ENCODE measurements at regions of chrX and their contacts with region 1.

Region 1: GRCh38 chrX:136866337-136867095 is 14.0 kb downstream of the RBMX start:
- DNase-seq: no peak
- ATAC-seq: peak in 1 of 4 experiments; percentile 16
- H3K4me3 ChIP-seq: no peak overlapping the region
- H3K4me3 Mint-ChIP-seq: no peak overlapping the region
- H3K27ac ChIP-seq: no peak overlapping the region
- H3K27ac Mint-ChIP-seq: peak overlapping the region in 1 of 2 donors; percentile 55
- H3K4me1 ChIP-seq: peaks cover 0 to 3% of the 10 kb centered on the region in 2 experiments
- H3K4me1 Mint-ChIP-seq: peaks cover 31 to 39% (median 34%) of the 10 kb centered on the region in 3 donors
- H3K27me3 ChIP-seq: no peaks in the 10 kb centered on the region
- H3K27me3 Mint-ChIP-seq: peaks cover 0 to 6% of the 10 kb centered on the region in 2 donors

Region 2: GRCh38 chrX:136477026-136477425 is 389.5 kb before region 1 on chrX:
- CTCF ChIA-PET with region 1: no interaction called
- POLR2A ChIA-PET with region 1: interaction called in 1 of 2 experiments, 10 read pairs
- DNase-seq: no peak
- ATAC-seq: no peak
- H3K4me3 ChIP-seq: no peak overlapping the region
- H3K4me3 Mint-ChIP-seq: no peak overlapping the region
- H3K27ac ChIP-seq: no peak overlapping the region
- H3K27ac Mint-ChIP-seq: no peak overlapping the region
- H3K4me1 ChIP-seq: no peaks in the 10 kb centered on the region
- H3K4me1 Mint-ChIP-seq: no peaks in the 10 kb centered on the region
- H3K27me3 ChIP-seq: peaks cover 0 to 4% of the 10 kb centered on the region in 2 experiments
- H3K27me3 Mint-ChIP-seq: peaks cover 0 to 20% of the 10 kb centered on the region in 2 donors

Region 3: DNA sequence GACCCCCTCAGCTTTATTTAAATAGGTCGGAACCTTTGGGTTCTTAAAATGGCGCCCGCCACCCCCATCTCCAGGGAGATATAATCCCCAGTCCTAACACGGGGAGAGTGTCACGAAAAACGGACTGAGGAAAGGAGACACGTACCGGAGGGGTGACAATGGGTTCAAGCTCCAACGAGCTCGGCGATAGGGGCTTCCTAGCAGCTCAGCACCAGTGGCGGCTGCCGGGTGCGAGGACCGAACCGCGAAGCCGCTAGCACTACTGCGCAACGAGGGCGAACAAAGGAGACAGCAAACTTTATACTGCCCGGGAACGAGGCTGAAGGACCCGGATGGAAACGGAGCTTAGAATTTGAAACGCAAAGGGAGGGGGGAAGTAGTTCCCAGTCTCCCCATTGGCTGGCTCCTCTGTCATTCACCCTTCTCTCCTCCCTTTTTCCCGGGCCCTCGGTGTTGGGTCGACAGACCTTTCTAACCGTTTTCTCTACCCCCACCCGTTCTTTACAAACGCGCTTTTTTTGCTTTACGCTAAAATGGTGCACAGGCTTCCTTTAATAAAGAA is 14.0 kb after region 1 on chrX and contains the start of gene RBMX:
- CTCF ChIA-PET with region 1: interaction called in 1 of 2 experiments, 5 read pairs
- POLR2A ChIA-PET with region 1: interaction called, 3 to 22 read pairs
- DNase-seq: peak; percentile 74 to 94 (median 87)
- ATAC-seq: peak; percentile 89 to 93 (median 91)
- H3K4me3 ChIP-seq: peak within 1 kb of the TSS; percentile 87
- H3K4me3 Mint-ChIP-seq: peak within 1 kb of the TSS; percentile 94 to 96 (median 96)
- H3K27ac ChIP-seq: peak within 1 kb of the TSS; percentile 97
- H3K27ac Mint-ChIP-seq: peak within 1 kb of the TSS; percentile 97 to 99
- H3K4me1 ChIP-seq: peaks cover 5 to 17% of the 10 kb centered on the region in 2 experiments
- H3K4me1 Mint-ChIP-seq: peaks cover 11 to 21% (median 19%) of the 10 kb centered on the region in 3 donors
- H3K27me3 ChIP-seq: no peaks in the 10 kb centered on the region
- H3K27me3 Mint-ChIP-seq: peaks cover 0 to 3% of the 10 kb centered on the region in 2 donors
- total RNA-seq, gene RBMX: 203 to 281 (median 209) TPM

Region 4: DNA sequence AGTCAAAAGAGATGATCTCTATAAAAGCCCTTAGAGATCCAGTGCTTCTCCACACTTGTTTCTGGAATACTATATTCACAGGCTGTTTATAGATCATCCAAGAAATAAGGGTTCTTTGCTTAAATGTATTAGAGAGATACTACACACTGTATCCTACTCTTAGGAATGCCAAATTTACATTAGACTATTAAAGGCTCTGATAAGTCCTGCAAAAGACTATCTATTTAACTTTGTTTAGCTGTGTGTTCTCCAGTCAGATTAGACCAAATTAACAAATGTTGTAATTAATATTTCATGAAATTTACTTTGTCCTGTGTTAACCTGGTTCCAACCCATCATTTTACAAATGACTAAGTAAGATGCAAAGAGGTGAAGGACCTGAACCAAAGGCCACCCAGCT is 438.9 kb after region 1 on chrX:
- CTCF ChIA-PET with region 1: no interaction called
- POLR2A ChIA-PET with region 1: no interaction called
- DNase-seq: no peak
- ATAC-seq: no peak
- H3K4me3 ChIP-seq: no peak overlapping the region
- H3K4me3 Mint-ChIP-seq: no peak overlapping the region
- H3K27ac ChIP-seq: no peak overlapping the region
- H3K27ac Mint-ChIP-seq: no peak overlapping the region
- H3K4me1 ChIP-seq: no peaks in the 10 kb centered on the region
- H3K4me1 Mint-ChIP-seq: no peaks in the 10 kb centered on the region
- H3K27me3 ChIP-seq: no peaks in the 10 kb centered on the region
- H3K27me3 Mint-ChIP-seq: peaks cover 0 to 11% of the 10 kb centered on the region in 2 donors

Region 5: GRCh38 chrX:137387646-137388045 is 521.1 kb after region 1 on chrX:
- CTCF ChIA-PET with region 1: no interaction called
- POLR2A ChIA-PET with region 1: no interaction called
- DNase-seq: no peak
- ATAC-seq: no peak
- H3K4me3 ChIP-seq: no peak overlapping the region
- H3K4me3 Mint-ChIP-seq: no peak overlapping the region
- H3K27ac ChIP-seq: no peak overlapping the region
- H3K27ac Mint-ChIP-seq: no peak overlapping the region
- H3K4me1 ChIP-seq: no peaks in the 10 kb centered on the region
- H3K4me1 Mint-ChIP-seq: no peaks in the 10 kb centered on the region
- H3K27me3 ChIP-seq: no peaks in the 10 kb centered on the region
- H3K27me3 Mint-ChIP-seq: peaks cover 2 to 32% of the 10 kb centered on the region in 2 donors